Endothelial cell of umbilical vein (primary cell): ENCODE measurements at regions of chr6 and their contacts with region 1.

Region 1: DNA sequence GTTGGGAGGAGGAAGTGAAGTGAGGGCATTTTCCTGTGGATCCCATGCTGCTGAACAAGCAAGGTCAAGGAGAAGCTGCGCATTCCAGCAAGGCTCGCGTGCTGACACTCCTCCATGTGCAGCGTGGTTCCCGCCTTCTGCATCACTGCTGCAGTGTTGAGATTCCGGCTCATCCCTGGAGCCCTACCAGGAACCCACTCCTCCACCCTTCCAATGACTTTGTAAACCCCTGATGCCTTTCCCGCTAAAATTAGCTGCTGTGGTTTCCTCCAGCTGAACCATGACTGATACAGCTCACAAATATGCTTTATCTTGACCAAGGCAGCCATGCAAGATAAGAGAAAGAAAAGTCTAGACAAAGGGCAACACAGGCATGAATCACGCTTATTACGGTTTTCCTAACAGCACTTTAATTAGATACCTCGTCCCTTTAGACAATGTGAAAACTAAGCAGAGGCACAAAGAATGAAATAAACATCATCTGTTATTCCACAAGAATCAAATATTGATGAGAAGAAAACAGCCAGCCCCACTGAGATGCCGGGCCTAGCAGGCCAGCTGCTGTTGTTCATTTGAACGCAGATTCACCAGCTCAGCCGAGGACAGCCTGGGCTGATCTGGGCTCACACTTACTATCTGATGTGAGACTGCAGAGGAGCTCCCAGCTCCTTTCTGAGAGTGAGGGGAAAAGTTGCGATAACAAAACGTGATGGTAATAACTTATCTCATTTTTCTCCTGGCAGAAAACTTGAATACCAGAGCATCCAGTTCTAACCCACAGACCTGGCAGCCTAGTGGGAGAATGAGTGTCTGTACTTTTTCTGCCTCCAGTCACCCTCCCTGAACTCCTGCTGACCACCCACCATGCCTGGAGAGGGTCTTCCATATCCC is 14.2 kb upstream of the BNIP5 start:
- DNase-seq: peak; percentile 97
- H3K4me3 ChIP-seq: no peak overlapping the region
- H3K27ac ChIP-seq: peak overlapping the region; percentile 98
- H3K4me1 ChIP-seq: peaks cover 31% of the 10 kb centered on the region
- H3K27me3 ChIP-seq: peaks cover 0 to 15% of the 10 kb centered on the region in 2 experiments
- CTCF ChIP-seq: no peak
- POLR2A ChIP-seq: peak; percentile 84

Region 2: GRCh38 chr6:36027501-36028087 is 323.3 kb before region 1 on chr6 and contains the start of gene MAPK14:
- CTCF ChIA-PET with region 1: interaction called, 3 read pairs
- POLR2A ChIA-PET with region 1: interaction called, 3 read pairs
- dilution Hi-C with region 1: no loop called
- intact Hi-C with region 1: loop called (anchors 2 kb)
- DNase-seq: peak; percentile 100
- H3K4me3 ChIP-seq: peak within 1 kb of the TSS; percentile 71 to 96 (median 96)
- H3K27ac ChIP-seq: peak within 1 kb of the TSS; percentile 61
- H3K4me1 ChIP-seq: peaks cover 21% of the 10 kb centered on the region
- H3K27me3 ChIP-seq: no peaks in the 10 kb centered on the region
- CTCF ChIP-seq: peak; percentile 85 to 89
- POLR2A ChIP-seq: peak; percentile 95
- total RNA-seq, gene MAPK14: 50.6 and 54.1 TPM in 2 replicates

Region 3: DNA sequence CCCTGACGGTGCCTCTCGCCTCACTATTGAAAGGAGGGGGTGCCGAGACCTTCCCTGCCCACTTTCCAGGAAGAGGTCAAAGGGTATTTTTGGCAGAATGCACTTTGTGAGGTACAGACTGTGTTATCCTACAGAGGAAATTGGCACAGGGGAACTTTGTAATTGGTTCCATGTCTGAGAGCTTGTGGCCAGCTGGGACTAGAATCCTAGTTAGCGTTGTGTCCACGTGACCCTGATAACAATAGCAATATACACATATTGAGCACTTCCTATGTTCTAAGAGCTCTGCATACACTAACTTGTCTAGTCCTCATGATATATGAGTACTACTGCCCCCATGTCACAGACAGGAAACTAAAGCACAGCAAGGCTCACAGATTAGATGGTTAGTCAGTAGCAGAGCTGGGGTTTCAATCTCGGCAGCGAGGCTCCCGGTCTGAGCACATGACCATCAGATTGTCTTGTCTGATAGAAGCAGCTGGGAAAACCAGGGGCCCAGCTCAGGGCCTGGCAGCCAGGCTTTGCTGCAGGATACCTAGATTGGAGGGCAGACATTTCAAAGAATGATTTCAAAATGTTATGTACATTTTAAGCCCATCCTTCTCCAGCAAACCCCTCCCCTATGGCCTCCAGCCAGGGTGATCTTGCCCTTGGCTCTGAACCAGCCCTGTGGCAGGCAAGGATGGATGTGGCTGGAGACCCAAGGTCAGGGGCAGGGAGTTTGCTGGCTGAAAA is 219.2 kb before region 1 on chr6:
- CTCF ChIA-PET with region 1: interaction called, 7 read pairs
- POLR2A ChIA-PET with region 1: interaction called, 3 read pairs
- dilution Hi-C with region 1: no loop called
- intact Hi-C with region 1: loop called (anchors 1 kb)
- DNase-seq: peak; percentile 99
- H3K4me3 ChIP-seq: no peak overlapping the region
- H3K27ac ChIP-seq: peak overlapping the region; percentile 71
- H3K4me1 ChIP-seq: peaks cover 45% of the 10 kb centered on the region
- H3K27me3 ChIP-seq: no peaks in the 10 kb centered on the region
- CTCF ChIP-seq: no peak
- POLR2A ChIP-seq: peak; percentile 66

Region 4: DNA sequence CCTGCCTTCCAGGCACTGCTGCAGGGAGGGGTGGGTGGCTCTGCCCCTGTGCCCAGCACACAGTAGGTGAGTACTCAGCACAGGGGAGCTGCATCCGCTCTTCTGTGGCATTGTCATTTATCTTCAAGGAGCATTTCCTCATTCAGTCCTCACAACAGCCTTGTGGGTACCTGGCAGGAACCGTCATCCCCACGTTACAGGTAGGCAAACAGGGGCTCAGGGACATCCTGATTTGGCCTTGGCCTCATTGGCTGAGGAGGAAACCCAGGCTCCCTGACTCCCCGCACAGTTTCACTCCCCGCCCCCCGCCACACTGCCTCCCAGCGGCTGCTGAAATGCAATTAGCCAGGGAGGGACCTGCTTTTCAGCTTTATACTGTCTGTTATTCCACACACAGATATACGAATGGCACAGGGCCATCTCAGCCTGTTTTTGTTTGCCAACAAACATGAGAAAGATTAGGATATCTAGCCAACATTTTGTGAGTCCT is 105.3 kb before region 1 on chr6:
- CTCF ChIA-PET with region 1: no interaction called
- POLR2A ChIA-PET with region 1: interaction called, 5 read pairs
- dilution Hi-C with region 1: no loop called
- intact Hi-C with region 1: loop called (anchors 2 kb)
- DNase-seq: no peak
- H3K4me3 ChIP-seq: no peak overlapping the region
- H3K27ac ChIP-seq: peak overlapping the region; percentile 88
- H3K4me1 ChIP-seq: peaks cover 46% of the 10 kb centered on the region
- H3K27me3 ChIP-seq: no peaks in the 10 kb centered on the region
- CTCF ChIP-seq: peak; percentile 25 to 42
- POLR2A ChIP-seq: no peak

Region 5: GRCh38 chr6:36432151-36432633 is 81.3 kb after region 1 on chr6:
- CTCF ChIA-PET with region 1: no interaction called
- POLR2A ChIA-PET with region 1: no interaction called
- dilution Hi-C with region 1: no loop called
- intact Hi-C with region 1: no loop called
- DNase-seq: no peak
- H3K4me3 ChIP-seq: no peak overlapping the region
- H3K27ac ChIP-seq: no peak overlapping the region
- H3K4me1 ChIP-seq: no peaks in the 10 kb centered on the region
- H3K27me3 ChIP-seq: no peaks in the 10 kb centered on the region
- CTCF ChIP-seq: no peak
- POLR2A ChIP-seq: no peak